ENCODE measurements at regions of chr4 and their contacts with region 1.

Region 1: DNA sequence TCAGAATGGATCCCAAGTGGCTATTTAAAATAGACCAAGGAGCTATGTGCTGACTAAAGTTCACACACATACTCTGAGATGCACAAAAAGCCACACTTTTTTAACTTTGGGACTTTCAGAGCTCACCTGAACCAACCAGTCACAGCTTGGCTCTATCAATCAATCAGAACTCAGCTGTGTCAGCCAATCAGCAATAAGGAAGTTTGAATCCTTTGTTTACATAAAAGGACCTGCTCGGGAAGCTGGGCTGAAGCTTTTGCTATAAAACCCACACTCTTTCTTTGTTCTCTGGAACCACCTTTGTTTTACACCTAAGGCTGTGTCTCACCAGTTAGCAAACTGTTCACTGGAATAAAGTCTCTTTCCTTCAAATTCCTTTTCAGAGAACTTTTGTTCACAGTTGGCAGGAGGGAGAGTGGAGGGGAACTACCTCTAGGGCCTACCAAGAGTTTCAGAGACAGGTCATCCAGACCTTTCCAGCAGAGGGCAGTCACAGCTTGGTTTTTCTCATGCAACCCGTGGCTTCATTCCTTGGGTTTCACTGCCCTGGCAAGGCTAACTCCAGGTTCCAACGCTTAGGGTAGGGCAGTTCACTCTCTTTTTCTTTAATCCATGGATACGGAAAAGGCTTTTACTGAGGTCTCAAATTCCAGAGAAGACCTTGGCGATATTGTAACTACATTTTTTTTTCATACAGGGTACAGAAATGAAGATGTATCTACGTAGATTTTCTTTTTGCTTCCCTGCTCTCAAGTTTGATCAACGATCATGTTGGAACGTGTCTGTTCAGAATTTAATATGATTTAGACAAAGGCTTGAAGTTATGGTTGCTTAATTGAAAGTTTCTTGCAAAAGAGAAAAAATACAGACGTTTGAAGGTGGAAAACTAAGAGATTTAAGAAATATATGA is 80.7 kb downstream of the GPRIN3 start:
- DNase-seq: peak; percentile 56 to 64
- ATAC-seq: peak; percentile 65 to 90 (median 86)
- H3K4me3 ChIP-seq: no peak overlapping the region
- H3K27ac ChIP-seq: no peak overlapping the region
- H3K4me1 ChIP-seq: no peaks in the 10 kb centered on the region
- H3K27me3 ChIP-seq: no peaks in the 10 kb centered on the region
- CTCF ChIP-seq: peak; percentile 65

Region 2: GRCh38 chr4:88605736-88606135 is 621.2 kb before region 1 on chr4:
- intact Hi-C with region 1: no loop called
- DNase-seq: no peak
- ATAC-seq: no peak
- H3K4me3 ChIP-seq: no peak overlapping the region
- H3K27ac ChIP-seq: no peak overlapping the region
- H3K4me1 ChIP-seq: peaks cover 15% of the 10 kb centered on the region
- H3K27me3 ChIP-seq: no peaks in the 10 kb centered on the region
- CTCF ChIP-seq: no peak

Region 3: DNA sequence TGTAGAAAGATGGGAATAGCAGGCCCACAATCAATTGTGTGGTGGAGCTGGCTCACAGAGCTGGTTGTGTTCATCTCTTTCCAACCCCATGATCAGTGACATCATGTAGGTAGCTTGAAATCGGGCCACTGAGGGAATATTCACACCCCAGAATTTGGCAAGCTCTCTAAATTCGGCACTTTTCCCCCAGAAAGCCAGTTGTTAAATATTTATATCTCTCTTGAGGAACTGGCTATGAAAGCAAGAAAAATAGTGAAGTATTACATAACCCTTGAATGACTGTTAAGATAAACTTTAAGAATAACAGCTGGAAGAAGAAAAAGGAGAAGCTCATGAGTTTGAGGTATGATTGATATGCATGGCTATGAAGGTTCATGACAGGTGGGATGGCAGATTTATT is 41.8 kb after region 1 on chr4:
- intact Hi-C with region 1: no loop called
- DNase-seq: no peak
- ATAC-seq: no peak
- H3K4me3 ChIP-seq: no peak overlapping the region
- H3K27ac ChIP-seq: no peak overlapping the region
- H3K4me1 ChIP-seq: no peaks in the 10 kb centered on the region
- H3K27me3 ChIP-seq: no peaks in the 10 kb centered on the region
- CTCF ChIP-seq: no peak

Region 4: GRCh38 chr4:89434364-89434988 is 207.6 kb after region 1 on chr4:
- intact Hi-C with region 1: loop called (anchors 2 to 10 kb)
- DNase-seq: no peak
- ATAC-seq: no peak
- H3K4me3 ChIP-seq: no peak overlapping the region
- H3K27ac ChIP-seq: no peak overlapping the region
- H3K4me1 ChIP-seq: no peaks in the 10 kb centered on the region
- H3K27me3 ChIP-seq: no peaks in the 10 kb centered on the region
- CTCF ChIP-seq: peak; percentile 46

Region 5: DNA sequence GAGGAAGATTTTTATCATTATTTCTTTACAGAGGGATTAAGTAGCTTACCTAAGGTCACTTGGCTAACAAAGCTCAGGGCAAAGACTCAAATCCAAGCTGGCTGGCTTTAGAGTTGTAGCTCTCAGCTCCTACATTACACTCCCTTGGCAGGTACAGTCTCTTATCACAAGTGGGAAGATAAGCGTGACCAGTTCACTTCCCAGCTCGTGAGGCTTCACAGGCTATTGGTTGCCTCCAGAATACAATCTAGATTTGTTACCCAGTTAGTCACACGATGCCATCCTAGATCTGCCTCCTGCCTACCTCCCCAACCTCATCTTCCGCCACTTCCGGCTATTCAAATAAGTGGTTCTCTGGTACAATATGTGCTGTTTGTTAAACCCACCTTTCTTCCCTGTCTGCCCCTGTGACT is 671.4 kb after region 1 on chr4:
- intact Hi-C with region 1: loop called (anchors 2 to 5 kb)
- DNase-seq: no peak
- ATAC-seq: no peak
- H3K4me3 ChIP-seq: no peak overlapping the region
- H3K27ac ChIP-seq: no peak overlapping the region
- H3K4me1 ChIP-seq: no peaks in the 10 kb centered on the region
- H3K27me3 ChIP-seq: no peaks in the 10 kb centered on the region
- CTCF ChIP-seq: no peak

Region 6: DNA sequence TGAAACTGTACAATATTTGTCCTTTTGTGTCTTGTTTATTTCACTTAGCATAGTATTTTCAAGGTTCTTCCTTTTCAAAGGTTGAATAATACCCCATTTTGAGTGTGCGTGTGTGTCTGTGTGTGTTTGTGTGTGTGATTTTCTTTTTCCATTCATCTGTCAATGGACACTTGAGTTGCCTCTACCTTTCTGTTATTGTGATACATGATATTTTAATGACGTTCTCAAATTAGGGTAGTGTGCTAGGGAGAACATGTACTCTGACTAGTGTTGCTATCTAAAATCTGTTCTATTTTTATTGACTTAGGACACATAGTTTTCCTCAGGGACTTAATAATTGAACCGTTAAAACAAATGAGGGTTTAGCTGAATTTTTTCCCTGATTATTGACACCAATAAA is 677.6 kb after region 1 on chr4:
- intact Hi-C with region 1: loop called (anchors 2 to 5 kb)
- DNase-seq: no peak
- ATAC-seq: no peak
- H3K4me3 ChIP-seq: no peak overlapping the region
- H3K27ac ChIP-seq: no peak overlapping the region
- H3K4me1 ChIP-seq: no peaks in the 10 kb centered on the region
- H3K27me3 ChIP-seq: no peaks in the 10 kb centered on the region
- CTCF ChIP-seq: no peak